Stomach (tissue), 19 donors: ENCODE measurements at regions of chr4 and their contacts with region 1.

Region 1: GRCh38 chr4:48079972-48080391 is 54.1 kb downstream of the TXK start:
- DNase-seq: peak in 1 of 2 donors; percentile 19
- H3K4me3 ChIP-seq: no peak overlapping the region
- H3K27ac ChIP-seq: no peak overlapping the region
- H3K4me1 ChIP-seq: peaks cover 0 to 6% (median 0%) of the 10 kb centered on the region in 4 donors
- H3K27me3 ChIP-seq: no peaks in the 10 kb centered on the region
- CTCF ChIP-seq: no peak
- EP300 ChIP-seq: no peak
- POLR2A ChIP-seq: no peak

Region 2: GRCh38 chr4:48008021-48008596 is 71.9 kb before region 1 on chr4:
- intact Hi-C with region 1: loop called (anchors 10 kb)
- DNase-seq: no peak
- H3K4me3 ChIP-seq: no peak overlapping the region
- H3K27ac ChIP-seq: no peak overlapping the region
- H3K4me1 ChIP-seq: no peaks in the 10 kb centered on the region
- H3K27me3 ChIP-seq: no peaks in the 10 kb centered on the region
- CTCF ChIP-seq: no peak
- EP300 ChIP-seq: no peak
- POLR2A ChIP-seq: no peak